B cell (primary cell): ENCODE measurements at regions of chr10 and their contacts with region 1.

Region 1: DNA sequence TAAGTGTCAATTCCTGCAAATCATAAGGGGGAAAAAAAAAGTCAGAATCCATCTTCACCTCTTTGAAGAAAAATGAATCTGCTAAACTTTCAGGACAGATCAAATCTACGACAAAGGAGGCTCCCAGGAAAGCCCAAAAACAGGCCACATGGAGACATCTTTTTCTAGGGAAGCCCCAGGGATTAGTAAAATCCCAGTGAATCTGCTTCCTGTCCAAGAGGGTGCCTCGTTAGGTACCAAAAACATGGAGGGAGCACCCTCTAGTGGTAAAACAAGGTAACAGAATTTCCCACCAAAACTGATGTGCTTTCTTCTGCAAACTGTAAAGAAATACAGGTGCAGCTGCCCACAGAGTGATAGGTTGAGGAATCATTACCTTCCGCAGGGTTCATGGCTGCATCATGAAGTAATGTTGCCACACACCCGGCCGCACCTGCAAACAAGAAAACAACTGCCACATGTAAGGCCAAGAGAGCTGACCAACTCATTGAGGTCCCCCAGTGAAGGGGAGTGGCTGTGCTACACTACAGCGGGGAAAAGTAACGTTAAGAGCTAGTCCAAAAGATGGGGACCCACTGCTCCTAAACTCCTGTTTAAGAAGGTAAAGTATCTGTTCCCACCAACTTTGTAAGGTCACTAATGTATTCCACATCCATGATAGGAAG is 7.9 kb downstream of the SLC25A28 start:
- DNase-seq: peak; percentile 76
- ATAC-seq: peak; percentile 47
- H3K4me3 ChIP-seq: no peak overlapping the region
- H3K4me3 Mint-ChIP-seq: no peak overlapping the region
- H3K27ac ChIP-seq: no peak overlapping the region
- H3K27ac Mint-ChIP-seq: peak overlapping the region; percentile 7
- H3K4me1 ChIP-seq: peaks cover 15 to 30% of the 10 kb centered on the region in 2 donors
- H3K4me1 Mint-ChIP-seq: peaks cover 55% of the 10 kb centered on the region
- H3K27me3 ChIP-seq: no peaks in the 10 kb centered on the region
- H3K27me3 Mint-ChIP-seq: no peaks in the 10 kb centered on the region
- CTCF ChIP-seq: peak; percentile 94

Region 2: DNA sequence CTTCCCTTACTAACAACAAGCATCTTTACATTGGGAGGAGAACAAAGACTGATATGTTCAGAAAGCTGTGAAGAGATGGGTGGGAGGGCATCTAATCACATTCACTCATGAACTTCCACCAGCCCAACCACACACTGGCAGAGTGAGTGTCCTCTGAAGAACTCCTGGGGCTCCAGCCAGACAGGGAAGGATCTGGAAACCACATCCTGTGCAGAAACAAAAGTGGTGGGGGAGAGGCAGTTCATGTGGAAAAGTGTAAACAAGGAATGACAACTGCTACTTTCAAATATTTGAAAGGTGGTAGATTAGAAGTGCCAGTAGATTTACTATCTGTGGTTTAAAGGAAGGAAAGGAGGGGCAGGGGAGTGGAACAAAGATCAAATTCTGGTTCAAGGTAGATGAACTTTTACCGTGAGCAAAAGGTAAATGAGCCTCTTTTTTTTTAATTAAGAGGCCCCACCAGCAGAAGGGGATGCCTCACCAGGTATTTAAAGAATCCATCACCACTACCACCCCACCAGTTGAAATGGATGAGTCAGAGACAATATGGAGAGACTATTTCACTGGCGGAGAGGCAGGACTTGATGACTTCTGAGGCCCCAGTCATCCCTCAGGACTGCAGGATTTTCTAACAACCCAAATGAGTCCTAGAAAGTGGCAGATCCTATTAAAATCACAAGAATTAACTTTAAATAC is 216.4 kb before region 1 on chr10:
- CTCF ChIA-PET with region 1: interaction called, 34 read pairs
- POLR2A ChIA-PET with region 1: no interaction called
- intact Hi-C with region 1: loop called (anchors 1 kb)
- DNase-seq: no peak
- ATAC-seq: no peak
- H3K4me3 ChIP-seq: no peak overlapping the region
- H3K4me3 Mint-ChIP-seq: no peak overlapping the region
- H3K27ac ChIP-seq: no peak overlapping the region
- H3K27ac Mint-ChIP-seq: no peak overlapping the region
- H3K4me1 ChIP-seq: peaks cover 2 to 4% of the 10 kb centered on the region in 2 donors
- H3K4me1 Mint-ChIP-seq: peaks cover 1% of the 10 kb centered on the region
- H3K27me3 ChIP-seq: peaks cover 0 to 2% (median 0%) of the 10 kb centered on the region in 4 experiments
- H3K27me3 Mint-ChIP-seq: no peaks in the 10 kb centered on the region
- CTCF ChIP-seq: no peak

Region 3: DNA sequence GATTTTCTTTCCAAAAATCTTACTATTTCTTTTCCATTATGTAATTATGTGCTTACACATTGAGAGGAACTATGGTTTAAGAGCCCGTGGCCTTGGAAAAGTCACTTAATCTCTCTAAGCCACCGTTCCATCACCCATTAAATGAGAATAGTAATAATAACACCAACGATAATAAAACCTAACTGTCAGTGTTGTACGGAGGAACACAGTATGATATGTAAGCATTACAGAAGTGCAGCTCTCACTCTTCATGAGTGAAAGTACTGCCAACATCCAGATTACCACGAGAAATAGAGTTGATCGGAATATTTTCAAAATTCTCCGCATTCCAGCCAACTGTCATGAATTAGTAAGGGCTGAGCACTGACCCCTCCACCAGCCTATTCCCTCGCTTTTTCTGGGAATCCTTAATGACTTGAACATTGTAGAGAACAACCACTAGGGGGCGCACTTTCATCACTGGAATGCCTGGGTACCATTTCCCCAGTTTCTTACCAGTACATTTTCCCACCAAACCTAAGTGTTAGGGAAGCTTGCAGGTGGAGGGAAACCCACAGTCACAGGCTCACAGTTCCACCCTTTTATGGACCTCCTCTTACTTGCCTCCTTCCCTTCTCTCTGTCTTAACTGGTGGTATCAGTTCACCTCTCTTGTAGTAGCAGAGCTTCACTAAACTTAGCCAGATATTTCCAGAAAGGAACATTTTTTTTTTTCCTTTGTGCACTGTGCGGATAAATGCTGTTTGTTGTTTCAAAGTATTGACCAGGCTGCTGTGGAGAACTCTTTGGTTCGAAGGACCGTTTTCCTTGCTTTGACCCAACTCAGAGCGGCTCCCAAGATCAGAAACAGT is 51.8 kb before region 1 on chr10:
- CTCF ChIA-PET with region 1: interaction called, 353 read pairs
- POLR2A ChIA-PET with region 1: interaction called, 4 read pairs
- intact Hi-C with region 1: loop called (anchors 1 kb)
- DNase-seq: peak; percentile 70
- ATAC-seq: no peak
- H3K4me3 ChIP-seq: no peak overlapping the region
- H3K4me3 Mint-ChIP-seq: no peak overlapping the region
- H3K27ac ChIP-seq: no peak overlapping the region
- H3K27ac Mint-ChIP-seq: peak overlapping the region; percentile 39
- H3K4me1 ChIP-seq: peaks cover 8 to 18% of the 10 kb centered on the region in 2 donors
- H3K4me1 Mint-ChIP-seq: peaks cover 23% of the 10 kb centered on the region
- H3K27me3 ChIP-seq: peaks cover 0 to 5% (median 2%) of the 10 kb centered on the region in 4 experiments
- H3K27me3 Mint-ChIP-seq: peaks cover 5% of the 10 kb centered on the region
- CTCF ChIP-seq: peak; percentile 94

Region 4: DNA sequence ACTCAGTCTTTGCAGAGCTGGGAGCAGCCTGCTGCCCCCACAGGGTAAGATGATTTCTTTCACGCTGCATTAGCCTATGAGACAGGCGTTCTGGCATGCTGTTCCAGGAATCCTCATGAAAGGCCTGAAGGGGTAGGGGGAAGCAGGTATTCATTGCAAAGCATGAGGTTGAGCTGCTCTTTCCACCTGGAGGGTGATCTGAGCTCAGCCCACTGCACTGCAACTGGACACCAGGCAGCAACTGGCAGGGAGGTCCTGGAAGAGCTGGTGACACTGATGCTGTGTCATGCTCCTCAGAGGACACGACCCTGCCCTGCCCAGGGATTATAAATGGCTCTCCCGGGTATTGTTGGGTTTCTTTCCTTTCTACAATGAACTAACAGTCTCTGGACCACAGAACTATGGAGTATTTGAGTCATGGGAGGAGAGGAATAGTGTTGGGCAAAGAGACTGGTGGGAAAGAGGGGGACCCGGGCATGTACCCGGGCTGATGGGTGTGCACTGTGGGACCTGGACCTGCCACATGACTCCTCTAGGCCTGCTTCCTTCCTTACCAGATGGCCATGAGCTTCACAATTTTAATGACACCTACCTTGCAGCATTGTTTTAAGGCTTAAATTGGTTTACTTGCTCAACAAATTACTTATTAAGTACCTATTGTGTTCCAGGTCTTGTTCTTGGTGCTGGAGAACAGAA is 16.4 kb before region 1 on chr10:
- CTCF ChIA-PET with region 1: interaction called, 26 read pairs
- POLR2A ChIA-PET with region 1: interaction called, 6 read pairs
- intact Hi-C with region 1: no loop called
- DNase-seq: no peak
- ATAC-seq: no peak
- H3K4me3 ChIP-seq: no peak overlapping the region
- H3K4me3 Mint-ChIP-seq: no peak overlapping the region
- H3K27ac ChIP-seq: no peak overlapping the region
- H3K27ac Mint-ChIP-seq: no peak overlapping the region
- H3K4me1 ChIP-seq: peaks cover 13 to 21% of the 10 kb centered on the region in 2 donors
- H3K4me1 Mint-ChIP-seq: peaks cover 18% of the 10 kb centered on the region
- H3K27me3 ChIP-seq: no peaks in the 10 kb centered on the region
- H3K27me3 Mint-ChIP-seq: no peaks in the 10 kb centered on the region
- CTCF ChIP-seq: no peak

Region 5: GRCh38 chr10:99659031-99659867 is 47.0 kb after region 1 on chr10 and contains the start of gene ENTPD7:
- CTCF ChIA-PET with region 1: interaction called, 10 read pairs
- POLR2A ChIA-PET with region 1: no interaction called
- intact Hi-C with region 1: no loop called
- DNase-seq: peak; percentile 91
- ATAC-seq: peak; percentile 99
- H3K4me3 ChIP-seq: peak within 1 kb of the TSS; percentile 63 to 89 (median 82)
- H3K4me3 Mint-ChIP-seq: peak within 1 kb of the TSS; percentile 84
- H3K27ac ChIP-seq: peak within 1 kb of the TSS in 1 of 2 donors; percentile 64
- H3K27ac Mint-ChIP-seq: peak within 1 kb of the TSS; percentile 32
- H3K4me1 ChIP-seq: peaks cover 7 to 16% of the 10 kb centered on the region in 2 donors
- H3K4me1 Mint-ChIP-seq: peaks cover 19% of the 10 kb centered on the region
- H3K27me3 ChIP-seq: peaks cover 0 to 4% (median 0%) of the 10 kb centered on the region in 4 experiments
- H3K27me3 Mint-ChIP-seq: peaks cover 9% of the 10 kb centered on the region
- CTCF ChIP-seq: peak; percentile 19
- total RNA-seq, gene ENTPD7: 6.0 and 6.2 TPM in 2 replicates

Region 6: DNA sequence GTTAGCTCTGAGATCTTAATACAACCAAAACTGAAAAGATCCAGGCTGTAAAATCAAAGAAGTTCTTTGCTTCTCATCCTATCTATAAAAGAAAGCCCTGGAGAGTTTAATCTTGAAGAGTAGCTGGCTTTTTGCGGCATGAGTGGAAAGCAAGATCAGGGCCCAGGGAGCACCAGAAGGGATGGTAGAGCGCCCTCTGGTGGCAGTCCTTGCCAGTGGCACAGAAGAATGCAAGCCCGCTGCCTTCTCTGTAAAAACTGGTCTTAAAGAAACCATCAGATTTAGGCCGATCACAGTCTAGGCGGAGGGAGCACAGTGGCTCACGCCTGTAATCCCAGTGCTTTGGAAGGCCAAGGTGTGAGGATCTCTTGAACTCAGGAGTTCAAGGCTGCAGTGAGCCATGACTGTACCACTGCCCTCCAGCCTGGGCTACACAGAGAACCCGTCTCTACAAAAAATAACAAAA is 433.8 kb after region 1 on chr10:
- CTCF ChIA-PET with region 1: no interaction called
- POLR2A ChIA-PET with region 1: no interaction called
- intact Hi-C with region 1: no loop called
- DNase-seq: peak; percentile 83
- ATAC-seq: peak; percentile 70
- H3K4me3 ChIP-seq: no peak overlapping the region
- H3K4me3 Mint-ChIP-seq: no peak overlapping the region
- H3K27ac ChIP-seq: no peak overlapping the region
- H3K27ac Mint-ChIP-seq: no peak overlapping the region
- H3K4me1 ChIP-seq: peaks cover 0 to 4% of the 10 kb centered on the region in 2 donors
- H3K4me1 Mint-ChIP-seq: peaks cover 4% of the 10 kb centered on the region
- H3K27me3 ChIP-seq: no peaks in the 10 kb centered on the region
- H3K27me3 Mint-ChIP-seq: no peaks in the 10 kb centered on the region
- CTCF ChIP-seq: peak; percentile 97